ENCODE measurements at regions of chr10 and their contacts with region 1.

Region 1: DNA sequence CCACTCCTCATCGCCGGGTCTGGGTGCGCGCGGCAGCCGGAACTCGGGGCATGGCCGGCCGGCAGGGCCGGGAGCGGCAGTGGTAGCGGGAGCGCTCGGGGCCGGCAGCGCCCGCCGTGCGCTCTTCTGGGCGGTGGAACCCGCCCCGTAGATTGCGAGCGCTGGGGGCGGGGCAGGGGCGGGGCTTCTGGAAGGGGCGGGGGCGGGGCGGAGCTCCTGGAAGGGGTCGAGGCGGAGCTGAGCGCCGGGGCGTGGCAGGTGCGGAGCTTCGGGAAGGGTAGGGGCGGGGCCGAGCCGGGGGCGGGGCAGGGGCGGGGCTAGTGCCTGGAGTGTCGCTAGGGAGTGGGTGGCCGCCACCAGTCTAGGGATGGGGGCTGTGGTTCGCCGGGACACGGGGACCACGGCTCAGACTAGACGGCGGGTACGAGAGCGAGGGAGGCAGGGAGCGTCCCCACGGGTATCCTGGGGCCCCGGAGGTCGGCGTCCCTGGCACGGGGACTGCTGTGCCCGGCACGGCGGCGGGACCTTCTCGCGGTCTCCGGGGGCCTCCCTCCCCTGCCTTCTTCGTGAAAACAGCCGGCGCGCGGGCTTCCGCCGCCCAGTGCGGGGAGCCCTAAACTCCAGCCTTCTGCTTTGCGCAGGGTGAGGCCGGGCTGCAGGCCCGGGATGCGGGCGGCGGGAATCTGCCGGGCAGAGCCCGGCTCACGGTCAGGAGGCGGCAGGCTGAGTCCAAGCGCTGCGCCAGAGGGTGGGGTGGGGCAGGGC is at the start of gene STK32C:
- DNase-seq: peak; percentile 84 to 89 (median 86)
- H3K4me3 ChIP-seq: peak within 1 kb of the TSS; percentile 69 to 87 (median 82)
- H3K4me3 Mint-ChIP-seq: peak within 1 kb of the TSS; percentile 96 to 97
- H3K27ac ChIP-seq: peak within 1 kb of the TSS in 1 of 2 donors; percentile 56
- H3K27ac Mint-ChIP-seq: peak within 1 kb of the TSS in 2 of 7 donors; percentile 26 to 76
- H3K4me1 ChIP-seq: peaks cover 16 to 24% of the 10 kb centered on the region in 2 donors
- H3K4me1 Mint-ChIP-seq: peaks cover 24% of the 10 kb centered on the region
- H3K27me3 ChIP-seq: peaks cover 4 to 33% of the 10 kb centered on the region in 2 donors
- H3K27me3 Mint-ChIP-seq: peaks cover 24 to 41% (median 25%) of the 10 kb centered on the region in 3 donors
- CTCF ChIP-seq: no peak
- polyA plus RNA-seq, gene STK32C: 13.6 to 22.8 (median 18.4) TPM

Region 2: GRCh38 chr10:132229834-132230556 is 78.0 kb before region 1 on chr10:
- intact Hi-C with region 1: loop called (anchors 10 kb)
- DNase-seq: peak; percentile 31 to 63 (median 32)
- H3K4me3 ChIP-seq: peak overlapping the region in 2 of 3 experiments; percentile 28 to 63
- H3K4me3 Mint-ChIP-seq: peak overlapping the region; percentile 79 to 89
- H3K27ac ChIP-seq: peak overlapping the region; percentile 24 to 72
- H3K27ac Mint-ChIP-seq: peak overlapping the region; percentile 50 to 90 (median 83)
- H3K4me1 ChIP-seq: peaks cover 72 to 80% of the 10 kb centered on the region in 2 donors
- H3K4me1 Mint-ChIP-seq: peaks cover 45% of the 10 kb centered on the region
- H3K27me3 ChIP-seq: peaks cover 0 to 15% of the 10 kb centered on the region in 2 donors
- H3K27me3 Mint-ChIP-seq: peaks cover 6 to 13% (median 11%) of the 10 kb centered on the region in 3 donors
- CTCF ChIP-seq: no peak

Region 3: DNA sequence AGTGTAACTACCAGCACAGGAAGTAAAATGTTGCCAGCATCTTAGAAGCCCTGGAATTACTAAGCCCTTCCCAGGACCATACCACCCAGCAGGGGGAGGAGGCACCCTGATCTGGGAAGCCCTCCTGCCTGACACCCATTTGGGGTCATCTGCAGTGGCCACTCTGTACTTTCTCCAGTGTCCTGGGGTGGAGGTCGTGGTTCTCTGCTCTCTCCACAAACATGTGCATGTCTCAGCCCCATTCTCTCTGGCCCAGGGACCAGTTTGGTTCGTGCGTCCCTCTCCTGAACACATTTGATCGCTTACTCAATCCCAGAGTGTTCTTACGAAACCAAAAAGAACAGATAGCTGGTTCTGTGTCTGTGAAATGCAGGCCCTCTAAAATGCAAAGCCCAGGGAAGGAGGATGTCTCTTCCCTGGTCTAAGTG is 14.6 kb after region 1 on chr10:
- intact Hi-C with region 1: no loop called
- DNase-seq: peak in 2 of 3 donors; percentile 42 to 49
- H3K4me3 ChIP-seq: peak overlapping the region in 1 of 3 experiments; percentile 27
- H3K4me3 Mint-ChIP-seq: peak overlapping the region; percentile 18 to 74
- H3K27ac ChIP-seq: peak overlapping the region in 1 of 2 donors; percentile 53
- H3K27ac Mint-ChIP-seq: peak overlapping the region; percentile 60 to 83 (median 76)
- H3K4me1 ChIP-seq: peaks cover 39 to 43% of the 10 kb centered on the region in 2 donors
- H3K4me1 Mint-ChIP-seq: peaks cover 53% of the 10 kb centered on the region
- H3K27me3 ChIP-seq: no peaks in the 10 kb centered on the region
- H3K27me3 Mint-ChIP-seq: peaks cover 0 to 1% (median 0%) of the 10 kb centered on the region in 3 donors
- CTCF ChIP-seq: no peak

Region 4: GRCh38 chr10:132341017-132341416 is 33.0 kb after region 1 on chr10:
- intact Hi-C with region 1: loop called in 1 of 2 experiments (anchors 5 kb)
- DNase-seq: no peak
- H3K4me3 ChIP-seq: no peak overlapping the region
- H3K4me3 Mint-ChIP-seq: no peak overlapping the region
- H3K27ac ChIP-seq: no peak overlapping the region
- H3K27ac Mint-ChIP-seq: no peak overlapping the region
- H3K4me1 ChIP-seq: peaks cover 7 to 16% of the 10 kb centered on the region in 2 donors
- H3K4me1 Mint-ChIP-seq: peaks cover 15% of the 10 kb centered on the region
- H3K27me3 ChIP-seq: no peaks in the 10 kb centered on the region
- H3K27me3 Mint-ChIP-seq: peaks cover 0 to 1% (median 1%) of the 10 kb centered on the region in 3 donors
- CTCF ChIP-seq: no peak

Region 5: DNA sequence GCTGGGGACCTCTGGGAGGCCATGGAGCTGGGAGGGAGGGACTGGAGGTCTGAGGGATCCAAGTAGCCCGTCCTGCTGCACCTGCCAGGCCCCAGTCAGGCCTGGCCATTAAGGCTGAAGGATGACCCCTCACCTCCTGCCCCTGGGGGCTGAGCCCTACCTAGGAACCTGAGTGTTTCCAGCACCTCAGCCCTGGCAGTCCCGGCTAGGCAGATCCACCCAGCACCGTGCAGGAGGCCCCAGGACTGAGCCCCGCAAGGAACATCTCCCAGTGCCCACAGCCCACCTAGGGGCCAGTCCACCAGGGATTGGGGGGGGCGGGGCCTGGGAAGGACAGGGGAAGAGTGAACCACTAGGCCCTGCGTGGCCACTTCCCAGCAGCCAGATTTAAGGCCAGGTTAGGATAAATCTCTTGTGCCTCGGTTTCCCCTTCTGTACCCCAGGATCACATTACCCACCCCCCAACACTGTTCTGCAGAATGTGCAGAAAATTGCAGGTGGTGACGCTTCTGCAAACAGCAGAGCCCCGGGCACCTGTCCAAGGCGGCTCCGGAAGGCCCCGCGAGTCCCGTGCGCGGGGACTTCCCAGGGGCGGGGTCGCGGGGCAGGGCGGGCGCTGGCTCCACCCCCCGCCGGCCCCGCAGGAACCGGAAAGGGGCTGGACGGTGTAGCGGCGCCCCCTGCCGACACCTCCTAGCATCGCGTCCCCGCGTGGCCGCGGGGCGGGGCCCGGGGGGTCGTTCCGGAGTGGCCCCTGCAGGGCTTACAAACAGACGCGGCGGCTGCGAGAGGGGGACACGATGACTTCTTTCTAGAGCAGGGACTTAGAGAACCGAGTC is 144.8 kb after region 1 on chr10:
- intact Hi-C with region 1: loop called (anchors 5 kb)
- DNase-seq: peak; percentile 77 to 91 (median 80)
- H3K4me3 ChIP-seq: peak overlapping the region in 2 of 3 experiments; percentile 1 to 43
- H3K4me3 Mint-ChIP-seq: peak overlapping the region; percentile 48 to 78
- H3K27ac ChIP-seq: peak overlapping the region; percentile 42 to 75
- H3K27ac Mint-ChIP-seq: peak overlapping the region; percentile 66 to 91 (median 82)
- H3K4me1 ChIP-seq: peaks cover 44 to 48% of the 10 kb centered on the region in 2 donors
- H3K4me1 Mint-ChIP-seq: peaks cover 34% of the 10 kb centered on the region
- H3K27me3 ChIP-seq: peaks cover 0 to 2% of the 10 kb centered on the region in 2 donors
- H3K27me3 Mint-ChIP-seq: peaks cover 2 to 6% (median 2%) of the 10 kb centered on the region in 3 donors
- CTCF ChIP-seq: peak; percentile 99